CD14-positive monocyte (primary cell): ENCODE measurements at regions of chr7 and their contacts with region 1.

Region 1: DNA sequence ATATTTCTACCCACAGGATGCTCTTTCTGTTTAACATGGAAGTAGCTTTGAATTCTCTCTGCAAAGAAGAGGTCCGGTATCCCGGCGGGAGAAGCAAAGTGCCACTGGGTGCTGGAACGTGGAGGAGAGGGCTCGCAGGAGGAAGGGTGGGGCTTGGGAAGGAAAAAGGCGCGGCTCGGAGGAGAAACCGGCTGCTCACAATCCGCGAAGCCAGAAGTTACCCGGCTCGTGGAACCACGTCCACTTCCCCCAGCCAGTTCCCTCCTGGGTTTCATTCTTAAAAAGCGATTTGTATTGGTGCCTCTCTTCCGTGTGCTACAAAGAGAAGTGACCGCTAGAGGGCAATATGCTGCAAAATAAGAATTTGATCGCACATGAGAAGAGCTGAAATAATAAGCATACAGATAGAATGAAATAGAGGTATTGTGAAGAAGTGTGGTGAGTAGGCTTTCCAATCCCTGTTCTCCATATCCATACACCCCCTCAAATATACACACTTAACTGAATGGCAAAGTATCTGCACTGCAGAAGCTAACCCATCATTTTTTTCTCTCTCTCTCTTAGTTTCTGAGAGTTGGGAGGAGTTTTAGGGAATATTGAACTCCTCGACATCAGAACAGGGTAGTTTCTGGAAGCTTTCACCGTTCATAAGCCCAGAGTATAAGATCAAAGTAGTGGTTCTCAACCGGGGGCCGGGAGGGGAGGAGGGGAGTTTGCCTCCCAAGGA is 31.1 kb downstream of the TRIL start:
- DNase-seq: peak; percentile 74 to 81 (median 78)
- H3K4me3 ChIP-seq: peak overlapping the region; percentile 44 to 75 (median 61)
- H3K4me3 Mint-ChIP-seq: peak overlapping the region; percentile 94
- H3K27ac ChIP-seq: peak overlapping the region in 1 of 2 donors; percentile 52
- H3K27ac Mint-ChIP-seq: peak overlapping the region in 6 of 7 donors; percentile 37 to 85 (median 60)
- H3K4me1 ChIP-seq: peaks cover 15 to 25% of the 10 kb centered on the region in 2 donors
- H3K4me1 Mint-ChIP-seq: peaks cover 34% of the 10 kb centered on the region
- H3K27me3 ChIP-seq: peaks cover 4 to 14% of the 10 kb centered on the region in 2 donors
- H3K27me3 Mint-ChIP-seq: peaks cover 13 to 16% (median 13%) of the 10 kb centered on the region in 3 donors
- CTCF ChIP-seq: peak; percentile 88

Region 2: DNA sequence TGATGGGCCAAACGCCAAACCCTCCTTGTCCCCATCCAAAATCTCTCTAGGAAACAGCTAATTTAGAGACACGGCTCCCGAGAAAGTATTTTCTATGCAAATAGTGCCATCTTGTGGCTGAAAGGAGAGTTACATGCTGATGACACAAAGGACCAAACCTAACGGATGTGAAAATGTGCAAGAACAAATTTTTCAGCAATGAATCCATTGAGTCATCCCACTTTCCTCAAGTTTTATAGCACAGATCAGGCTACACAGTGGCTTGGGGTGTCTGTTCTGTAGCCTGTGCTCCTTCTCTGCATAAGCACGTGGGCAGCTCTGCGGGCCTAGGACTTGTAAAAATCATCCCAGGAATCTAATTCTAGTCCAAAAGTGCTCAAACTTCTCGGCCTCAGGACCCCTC is 481.8 kb after region 1 on chr7:
- intact Hi-C with region 1: loop called (anchors 2 to 5 kb)
- DNase-seq: peak; percentile 39 to 58 (median 53)
- H3K4me3 ChIP-seq: no peak overlapping the region
- H3K4me3 Mint-ChIP-seq: no peak overlapping the region
- H3K27ac ChIP-seq: no peak overlapping the region
- H3K27ac Mint-ChIP-seq: no peak overlapping the region
- H3K4me1 ChIP-seq: no peaks in the 10 kb centered on the region
- H3K4me1 Mint-ChIP-seq: no peaks in the 10 kb centered on the region
- H3K27me3 ChIP-seq: no peaks in the 10 kb centered on the region
- H3K27me3 Mint-ChIP-seq: peaks cover 0 to 2% (median 0%) of the 10 kb centered on the region in 3 donors
- CTCF ChIP-seq: peak; percentile 90